SK-N-SH (cell line): ENCODE measurements at regions of chr7 and their contacts with region 1.

Region 1: GRCh38 chr7:41003031-41003925 is 699.6 kb downstream of the INHBA start:
- DNase-seq: peak; percentile 27
- H3K4me3 ChIP-seq: peak overlapping the region in 1 of 2 experiments; percentile 30; a peak in 1 of 4 replicates
- H3K27ac ChIP-seq: no peak overlapping the region
- H3K4me1 ChIP-seq: peaks cover 0 to 6% of the 10 kb centered on the region in 2 experiments; a peak in 1 of 4 replicates
- H3K27me3 ChIP-seq: no peaks in the 10 kb centered on the region
- CTCF ChIP-seq: peak; percentile 91
- EP300 ChIP-seq: no peak
- RAD21 ChIP-seq: peak; percentile 70

Region 2: GRCh38 chr7:40833888-40834234 is 169.4 kb before region 1 on chr7:
- CTCF ChIA-PET with region 1: no interaction called
- POLR2A ChIA-PET with region 1: no interaction called
- DNase-seq: no peak
- H3K4me3 ChIP-seq: no peak overlapping the region
- H3K27ac ChIP-seq: no peak overlapping the region
- H3K4me1 ChIP-seq: no peaks in the 10 kb centered on the region
- H3K27me3 ChIP-seq: no peaks in the 10 kb centered on the region
- CTCF ChIP-seq: peak; percentile 51
- EP300 ChIP-seq: no peak
- RAD21 ChIP-seq: peak; percentile 61

Region 3: DNA sequence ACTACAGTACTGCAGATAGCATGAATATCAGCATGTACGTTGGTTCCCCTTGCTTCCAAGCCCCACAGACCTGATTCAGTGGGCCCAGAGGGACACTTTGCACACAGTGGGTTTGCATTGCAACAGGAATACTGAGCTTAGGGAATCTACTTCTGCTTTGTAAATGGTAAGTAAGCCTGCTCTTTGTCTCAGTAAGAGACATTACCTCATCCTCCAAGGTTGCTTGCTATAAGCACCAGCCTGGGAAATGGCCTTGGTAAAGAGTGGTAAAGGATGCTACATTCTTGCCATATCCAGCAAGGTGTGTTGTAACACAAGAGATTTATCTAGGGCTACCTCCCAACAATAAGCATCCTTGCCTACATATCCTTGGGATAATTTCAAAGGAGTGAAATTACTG is 30.9 kb before region 1 on chr7:
- CTCF ChIA-PET with region 1: interaction called, 11 read pairs
- POLR2A ChIA-PET with region 1: no interaction called
- DNase-seq: no peak
- H3K4me3 ChIP-seq: no peak overlapping the region
- H3K27ac ChIP-seq: no peak overlapping the region
- H3K4me1 ChIP-seq: peaks cover 0 to 22% of the 10 kb centered on the region in 2 experiments; a peak in 2 of 4 replicates
- H3K27me3 ChIP-seq: no peaks in the 10 kb centered on the region
- CTCF ChIP-seq: no peak
- EP300 ChIP-seq: no peak
- RAD21 ChIP-seq: no peak

Region 4: GRCh38 chr7:41067576-41067975 is 64.3 kb after region 1 on chr7:
- CTCF ChIA-PET with region 1: no interaction called
- POLR2A ChIA-PET with region 1: no interaction called
- DNase-seq: no peak
- H3K4me3 ChIP-seq: no peak overlapping the region
- H3K27ac ChIP-seq: no peak overlapping the region
- H3K4me1 ChIP-seq: no peaks in the 10 kb centered on the region; a peak in 1 of 4 replicates
- H3K27me3 ChIP-seq: no peaks in the 10 kb centered on the region
- CTCF ChIP-seq: no peak
- EP300 ChIP-seq: no peak
- RAD21 ChIP-seq: no peak